Activated B cell treated with CpG ODN at 0.5 μM for 24 hours (primary cell): ENCODE measurements at regions of chr11 and their contacts with region 1.

Region 1: DNA sequence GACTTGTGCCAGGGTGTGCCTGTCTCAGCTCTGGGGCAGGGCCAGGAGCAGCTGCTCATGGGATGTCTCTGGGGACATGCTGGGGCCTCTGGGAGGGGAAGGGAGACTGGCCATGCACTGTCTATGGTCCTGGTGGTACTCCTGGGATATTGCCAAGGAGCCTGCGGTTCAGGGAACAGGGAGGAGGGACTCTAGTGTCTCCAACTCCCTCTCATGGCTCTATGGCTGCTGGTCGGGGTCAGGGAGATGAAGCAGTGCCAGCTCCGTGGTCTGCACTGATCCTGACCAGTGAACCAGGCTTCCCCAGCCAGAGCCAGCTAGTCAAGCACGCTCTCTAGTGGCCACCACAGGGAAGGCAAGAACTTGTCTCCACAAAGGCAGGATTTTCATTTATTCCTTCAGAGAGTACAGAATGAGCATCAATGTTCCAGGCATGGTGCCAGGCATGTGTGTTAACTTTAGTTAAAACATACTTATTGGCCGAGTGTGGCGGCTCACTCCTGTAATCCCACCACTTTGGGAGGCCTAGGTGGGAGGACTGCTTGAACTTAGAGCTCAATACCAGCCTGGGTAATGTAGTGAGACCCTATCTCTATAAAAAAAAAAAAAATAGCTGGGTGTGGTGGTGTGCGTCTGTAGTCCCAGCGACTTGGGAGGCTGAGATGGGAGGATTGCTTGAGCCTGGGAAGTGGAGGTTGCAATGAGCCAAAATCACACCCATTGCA is 2.5 kb upstream of the BEST1 start:
- DNase-seq: peak; percentile 51
- ATAC-seq: peak; percentile 92
- H3K4me3 Mint-ChIP-seq: no peak overlapping the region
- H3K27ac Mint-ChIP-seq: no peak overlapping the region
- H3K4me1 Mint-ChIP-seq: peaks cover 11% of the 10 kb centered on the region
- H3K27me3 Mint-ChIP-seq: no peaks in the 10 kb centered on the region
- CTCF ChIP-seq: peak; percentile 35

Region 2: DNA sequence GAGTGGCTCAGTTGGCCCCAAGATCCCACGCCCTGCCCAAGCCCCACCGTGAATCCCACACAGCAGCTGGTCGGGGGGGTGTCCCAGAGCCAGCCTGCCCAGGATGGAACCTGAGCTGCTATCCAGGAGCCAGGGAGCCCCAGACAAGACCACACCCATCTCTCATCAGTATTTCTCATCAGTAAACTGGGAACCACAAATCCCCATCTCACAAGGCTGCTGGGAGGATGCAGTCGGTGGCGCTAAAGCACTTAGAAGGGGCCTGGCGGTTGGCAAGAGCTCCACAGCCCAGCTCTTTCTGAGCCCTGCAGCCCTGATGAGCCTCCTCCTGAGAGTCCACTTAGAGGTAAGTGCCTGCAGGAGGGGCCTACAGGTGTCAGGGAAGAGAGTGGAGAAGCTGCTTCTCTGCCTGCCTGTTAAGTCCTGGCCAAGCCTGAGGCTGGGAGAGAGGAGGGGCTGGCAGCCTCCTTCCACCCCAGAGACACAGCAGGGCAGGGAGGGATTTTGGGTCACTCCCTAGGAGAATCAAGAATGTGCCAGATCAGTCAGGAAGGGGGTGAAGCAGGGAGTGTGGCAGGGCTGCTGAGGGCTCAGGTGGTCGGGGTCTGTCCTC is 62.4 kb before region 1 on chr11:
- CTCF ChIA-PET with region 1: interaction called, 14 read pairs
- POLR2A ChIA-PET with region 1: no interaction called
- intact Hi-C with region 1: no loop called
- DNase-seq: no peak
- ATAC-seq: no peak
- H3K4me3 Mint-ChIP-seq: no peak overlapping the region
- H3K27ac Mint-ChIP-seq: no peak overlapping the region
- H3K4me1 Mint-ChIP-seq: peaks cover 54% of the 10 kb centered on the region
- H3K27me3 Mint-ChIP-seq: no peaks in the 10 kb centered on the region
- CTCF ChIP-seq: no peak

Region 3: GRCh38 chr11:61899146-61899841 is 48.4 kb before region 1 on chr11:
- CTCF ChIA-PET with region 1: interaction called, 80 read pairs
- POLR2A ChIA-PET with region 1: interaction called, 3 read pairs
- intact Hi-C with region 1: loop called (anchors 1 kb)
- DNase-seq: peak; percentile 97
- ATAC-seq: peak; percentile 99
- H3K4me3 Mint-ChIP-seq: no peak overlapping the region
- H3K27ac Mint-ChIP-seq: peak overlapping the region; percentile 50
- H3K4me1 Mint-ChIP-seq: peaks cover 22% of the 10 kb centered on the region
- H3K27me3 Mint-ChIP-seq: no peaks in the 10 kb centered on the region
- CTCF ChIP-seq: peak; percentile 90